B cell (primary cell): ENCODE measurements at regions of chr5 and their contacts with region 1.

Region 1: GRCh38 chr5:142748568-142749249 is 21.5 kb upstream of the ARHGAP26 start:
- DNase-seq: peak; percentile 74
- ATAC-seq: peak; percentile 68
- H3K4me3 ChIP-seq: no peak overlapping the region
- H3K4me3 Mint-ChIP-seq: no peak overlapping the region
- H3K27ac ChIP-seq: no peak overlapping the region
- H3K27ac Mint-ChIP-seq: no peak overlapping the region
- H3K4me1 ChIP-seq: no peaks in the 10 kb centered on the region
- H3K4me1 Mint-ChIP-seq: no peaks in the 10 kb centered on the region
- H3K27me3 ChIP-seq: no peaks in the 10 kb centered on the region
- H3K27me3 Mint-ChIP-seq: peaks cover 13% of the 10 kb centered on the region
- CTCF ChIP-seq: peak; percentile 80

Region 2: DNA sequence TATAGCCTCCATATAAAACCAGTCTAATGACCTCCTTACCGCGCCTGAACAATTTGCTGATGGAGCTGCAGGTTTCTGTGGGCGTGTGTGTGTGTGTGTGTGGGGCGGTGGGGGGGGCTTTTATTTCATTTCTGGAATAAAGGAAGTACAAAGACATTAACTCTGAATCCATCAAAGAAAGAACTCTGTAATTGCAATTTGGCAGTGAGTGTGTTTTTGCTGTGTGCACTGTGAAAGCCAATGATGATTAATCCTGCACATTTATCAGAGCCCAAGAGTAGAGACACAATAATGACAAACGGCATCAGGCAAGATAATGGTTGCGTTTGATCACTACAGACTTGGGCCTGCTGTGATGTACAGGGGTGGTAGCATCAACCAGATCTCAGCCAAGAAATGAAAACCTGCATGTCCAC is 669.4 kb before region 1 on chr5:
- CTCF ChIA-PET with region 1: no interaction called
- POLR2A ChIA-PET with region 1: no interaction called
- intact Hi-C with region 1: no loop called
- DNase-seq: no peak
- ATAC-seq: no peak
- H3K4me3 ChIP-seq: no peak overlapping the region
- H3K4me3 Mint-ChIP-seq: no peak overlapping the region
- H3K27ac ChIP-seq: no peak overlapping the region
- H3K27ac Mint-ChIP-seq: no peak overlapping the region
- H3K4me1 ChIP-seq: no peaks in the 10 kb centered on the region
- H3K4me1 Mint-ChIP-seq: no peaks in the 10 kb centered on the region
- H3K27me3 ChIP-seq: no peaks in the 10 kb centered on the region
- H3K27me3 Mint-ChIP-seq: peaks cover 22% of the 10 kb centered on the region
- CTCF ChIP-seq: no peak

Region 3: GRCh38 chr5:142561486-142562097 is 187.1 kb before region 1 on chr5:
- CTCF ChIA-PET with region 1: no interaction called
- POLR2A ChIA-PET with region 1: no interaction called
- intact Hi-C with region 1: no loop called
- DNase-seq: no peak
- ATAC-seq: no peak
- H3K4me3 ChIP-seq: no peak overlapping the region
- H3K4me3 Mint-ChIP-seq: no peak overlapping the region
- H3K27ac ChIP-seq: no peak overlapping the region
- H3K27ac Mint-ChIP-seq: no peak overlapping the region
- H3K4me1 ChIP-seq: no peaks in the 10 kb centered on the region
- H3K4me1 Mint-ChIP-seq: no peaks in the 10 kb centered on the region
- H3K27me3 ChIP-seq: peaks cover 0 to 4% (median 1%) of the 10 kb centered on the region in 4 experiments
- H3K27me3 Mint-ChIP-seq: peaks cover 19% of the 10 kb centered on the region
- CTCF ChIP-seq: no peak

Region 4: GRCh38 chr5:142862594-142862993 is 113.9 kb after region 1 on chr5:
- CTCF ChIA-PET with region 1: interaction called, 343 read pairs
- POLR2A ChIA-PET with region 1: no interaction called
- intact Hi-C with region 1: loop called (anchors 1 kb)
- DNase-seq: no peak
- ATAC-seq: no peak
- H3K4me3 ChIP-seq: no peak overlapping the region
- H3K4me3 Mint-ChIP-seq: no peak overlapping the region
- H3K27ac ChIP-seq: no peak overlapping the region
- H3K27ac Mint-ChIP-seq: no peak overlapping the region
- H3K4me1 ChIP-seq: peaks cover 3 to 4% of the 10 kb centered on the region in 2 donors
- H3K4me1 Mint-ChIP-seq: peaks cover 13% of the 10 kb centered on the region
- H3K27me3 ChIP-seq: no peaks in the 10 kb centered on the region
- H3K27me3 Mint-ChIP-seq: no peaks in the 10 kb centered on the region
- CTCF ChIP-seq: no peak

Region 5: DNA sequence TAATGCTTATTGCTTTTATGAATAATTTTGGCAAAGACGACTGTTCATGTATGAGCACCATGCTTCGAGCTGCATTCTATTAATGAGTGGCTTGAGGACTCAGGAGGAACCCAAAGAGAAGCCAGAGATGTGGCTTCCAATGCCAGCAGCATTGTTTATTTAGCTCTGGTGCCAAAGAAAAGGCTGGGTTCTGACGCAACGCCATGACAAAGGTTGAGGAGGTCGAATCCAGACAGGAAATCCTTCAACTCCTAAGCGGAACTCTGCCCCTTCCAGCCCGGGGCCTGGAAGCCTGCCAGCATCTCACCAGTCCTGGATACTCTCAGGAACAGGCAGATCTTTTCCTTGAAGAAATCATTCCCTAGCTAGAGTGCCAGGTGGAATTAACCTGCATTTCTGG is 125.8 kb after region 1 on chr5:
- CTCF ChIA-PET with region 1: interaction called, 616 read pairs
- POLR2A ChIA-PET with region 1: no interaction called
- intact Hi-C with region 1: no loop called
- DNase-seq: no peak
- ATAC-seq: no peak
- H3K4me3 ChIP-seq: no peak overlapping the region
- H3K4me3 Mint-ChIP-seq: no peak overlapping the region
- H3K27ac ChIP-seq: no peak overlapping the region
- H3K27ac Mint-ChIP-seq: no peak overlapping the region
- H3K4me1 ChIP-seq: no peaks in the 10 kb centered on the region
- H3K4me1 Mint-ChIP-seq: no peaks in the 10 kb centered on the region
- H3K27me3 ChIP-seq: no peaks in the 10 kb centered on the region
- H3K27me3 Mint-ChIP-seq: no peaks in the 10 kb centered on the region
- CTCF ChIP-seq: no peak

Region 6: GRCh38 chr5:142881076-142881783 is 132.5 kb after region 1 on chr5:
- CTCF ChIA-PET with region 1: interaction called, 616 read pairs
- POLR2A ChIA-PET with region 1: interaction called, 5 read pairs
- intact Hi-C with region 1: loop called (anchors 1 kb)
- DNase-seq: peak; percentile 47
- ATAC-seq: peak; percentile 54
- H3K4me3 ChIP-seq: no peak overlapping the region
- H3K4me3 Mint-ChIP-seq: no peak overlapping the region
- H3K27ac ChIP-seq: no peak overlapping the region
- H3K27ac Mint-ChIP-seq: no peak overlapping the region
- H3K4me1 ChIP-seq: peaks cover 0 to 5% of the 10 kb centered on the region in 2 donors
- H3K4me1 Mint-ChIP-seq: peaks cover 9% of the 10 kb centered on the region
- H3K27me3 ChIP-seq: no peaks in the 10 kb centered on the region
- H3K27me3 Mint-ChIP-seq: no peaks in the 10 kb centered on the region
- CTCF ChIP-seq: no peak

Region 7: DNA sequence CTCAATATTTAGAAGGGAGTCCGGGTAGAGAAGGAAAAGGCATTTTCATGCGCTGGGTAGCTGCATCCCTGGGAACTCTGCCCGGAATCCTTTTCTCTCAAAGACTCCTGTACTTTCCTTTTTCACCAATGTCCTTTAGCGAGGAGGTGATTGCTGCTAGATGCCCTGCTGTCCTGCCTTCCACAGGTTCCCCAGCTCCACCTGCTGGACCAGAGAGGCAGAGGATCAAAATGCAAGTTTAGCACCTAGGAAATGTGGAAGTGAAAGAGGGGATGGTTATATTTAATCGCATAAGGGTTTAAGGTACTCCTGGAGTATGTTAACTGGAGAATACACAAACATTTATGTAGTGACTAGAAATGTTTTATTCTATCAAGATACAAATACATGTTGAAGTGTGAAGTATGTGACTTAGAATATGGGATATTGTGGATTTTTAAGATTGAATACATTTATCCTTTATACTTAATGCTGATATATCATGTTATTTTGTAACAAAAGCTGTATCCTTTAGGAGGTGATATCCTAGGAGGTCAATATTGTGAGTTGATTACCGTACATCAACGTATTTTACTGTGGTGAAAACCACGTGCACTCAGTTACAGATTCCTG is 167.2 kb after region 1 on chr5:
- CTCF ChIA-PET with region 1: interaction called, 14 read pairs
- POLR2A ChIA-PET with region 1: no interaction called
- intact Hi-C with region 1: no loop called
- DNase-seq: peak; percentile 52
- ATAC-seq: peak; percentile 63
- H3K4me3 ChIP-seq: no peak overlapping the region
- H3K4me3 Mint-ChIP-seq: no peak overlapping the region
- H3K27ac ChIP-seq: no peak overlapping the region
- H3K27ac Mint-ChIP-seq: no peak overlapping the region
- H3K4me1 ChIP-seq: peaks cover 0 to 6% of the 10 kb centered on the region in 2 donors
- H3K4me1 Mint-ChIP-seq: peaks cover 7% of the 10 kb centered on the region
- H3K27me3 ChIP-seq: no peaks in the 10 kb centered on the region
- H3K27me3 Mint-ChIP-seq: no peaks in the 10 kb centered on the region
- CTCF ChIP-seq: peak; percentile 36